ENCODE measurements at regions of chr17 and their contacts with region 1.

Region 1: DNA sequence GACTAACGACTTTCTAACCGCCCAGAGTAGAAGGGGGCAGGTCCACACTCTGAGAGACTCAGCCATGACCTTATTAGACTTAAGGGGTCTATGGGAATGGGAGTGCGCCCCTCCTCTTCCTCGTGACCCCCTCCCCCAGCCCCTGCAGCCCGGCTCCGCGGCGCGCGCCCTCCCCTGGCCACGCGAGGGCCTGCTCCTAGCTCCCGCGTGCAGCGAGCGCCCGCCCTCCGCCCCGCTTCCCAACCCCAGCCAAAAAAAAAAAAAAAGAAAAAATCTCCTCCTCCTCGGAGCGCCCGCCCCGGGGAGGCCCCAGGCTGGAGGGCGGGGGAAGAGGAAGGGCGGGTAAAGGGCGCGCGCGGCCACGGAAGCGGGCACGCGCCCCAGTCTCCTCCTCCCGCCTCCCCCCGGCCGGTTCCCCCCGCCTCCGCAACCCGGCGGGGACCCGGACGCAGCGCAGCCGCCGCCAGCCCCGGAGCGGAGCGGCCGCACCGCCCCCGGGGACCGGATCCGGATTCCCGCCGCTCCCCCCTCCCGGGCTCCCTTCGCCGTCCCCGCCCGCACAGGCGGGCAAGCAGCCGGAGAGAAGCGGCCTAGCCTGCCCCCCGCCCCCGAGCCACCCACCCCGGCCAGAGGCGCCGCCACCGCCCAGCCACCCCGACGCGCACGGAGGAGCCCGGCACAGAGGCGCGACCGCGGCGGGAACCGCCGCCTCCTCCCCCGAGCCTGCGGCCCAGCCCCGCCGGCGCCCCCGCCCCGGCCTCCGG is 949 bp downstream of the UBTF start:
- DNase-seq: peak; percentile 87
- H3K4me3 ChIP-seq: peak overlapping the region; percentile 80 to 95
- H3K27ac ChIP-seq: peak overlapping the region; percentile 98 to 100
- H3K4me1 ChIP-seq: peaks cover 5% of the 10 kb centered on the region
- H3K27me3 ChIP-seq: no peaks in the 10 kb centered on the region
- CTCF ChIP-seq: peak in 3 of 4 experiments; percentile 37 to 54 (median 53)
- POLR2A ChIP-seq: peak; percentile 51

Region 2: DNA sequence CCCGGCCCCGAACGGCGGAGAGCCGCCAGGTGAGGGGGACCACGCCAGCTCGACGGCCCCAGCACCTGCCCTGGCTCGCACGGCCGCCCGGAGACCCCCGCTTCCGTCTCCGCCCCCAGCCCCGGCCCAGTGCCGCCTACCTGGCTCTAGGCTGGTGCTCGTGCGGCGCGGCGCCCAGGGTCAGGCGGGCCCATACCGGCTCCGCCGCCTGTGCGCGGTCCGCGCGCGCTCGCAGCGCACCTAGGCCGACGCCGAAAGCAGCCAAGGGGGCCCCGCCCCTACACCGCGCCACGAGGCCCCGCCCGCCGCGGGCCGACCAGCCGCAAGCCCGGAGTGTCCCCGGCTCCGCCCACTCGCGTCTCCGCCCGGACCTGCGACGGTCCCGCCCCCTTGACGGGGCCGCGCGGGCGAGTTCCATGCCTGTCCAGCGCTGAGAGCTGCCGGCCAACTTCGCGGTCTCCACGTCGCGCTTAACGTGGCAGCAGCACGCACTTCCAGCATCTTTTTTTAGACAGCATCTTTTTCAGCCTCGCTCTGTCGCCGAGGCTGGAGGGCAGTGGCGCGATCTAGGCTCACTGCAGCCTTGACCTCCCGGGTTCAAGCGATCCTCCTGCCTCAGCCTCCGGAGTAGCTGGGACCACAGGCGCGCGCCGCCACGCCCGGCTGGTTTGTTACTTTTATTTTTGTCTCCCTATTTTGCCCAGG is 106.2 kb after region 1 on chr17 and contains the start of gene SLC25A39:
- intact Hi-C with region 1: loop called (anchors 2 kb)
- DNase-seq: peak; percentile 92
- H3K4me3 ChIP-seq: peak within 1 kb of the TSS; percentile 98 to 99
- H3K27ac ChIP-seq: peak within 1 kb of the TSS; percentile 92 to 93
- H3K4me1 ChIP-seq: peaks cover 6% of the 10 kb centered on the region
- H3K27me3 ChIP-seq: no peaks in the 10 kb centered on the region
- CTCF ChIP-seq: peak in 2 of 4 experiments; percentile 32 to 40
- POLR2A ChIP-seq: peak; percentile 62
- total RNA-seq, gene SLC25A39: 116 to 132 TPM

Region 3: DNA sequence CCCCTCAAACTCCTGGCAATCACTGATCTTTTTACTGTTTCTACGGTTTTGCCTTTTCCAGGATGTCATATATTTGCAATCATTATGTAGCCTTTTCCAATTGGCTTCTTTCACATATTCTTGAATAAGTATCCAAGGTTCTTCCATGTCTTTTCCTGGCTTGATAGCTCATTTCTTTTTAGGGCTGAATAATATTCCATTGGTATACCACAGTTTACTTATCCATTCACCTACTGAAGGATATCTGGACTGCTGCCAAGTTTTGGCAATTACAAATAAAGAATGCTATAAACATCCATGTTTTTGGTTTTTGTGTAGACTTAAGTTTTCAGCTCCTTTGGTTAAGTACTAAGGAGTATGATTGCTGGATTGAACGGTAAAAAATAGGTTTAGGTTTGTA is 268.6 kb after region 1 on chr17:
- intact Hi-C with region 1: no loop called
- DNase-seq: no peak
- H3K4me3 ChIP-seq: no peak overlapping the region
- H3K27ac ChIP-seq: no peak overlapping the region
- H3K4me1 ChIP-seq: no peaks in the 10 kb centered on the region
- H3K27me3 ChIP-seq: no peaks in the 10 kb centered on the region
- CTCF ChIP-seq: no peak
- POLR2A ChIP-seq: no peak

Measured in prostate gland (tissue), 2 donors.